Sigmoid colon (tissue), 7 donors: ENCODE measurements at regions of chr19 and their contacts with region 1.

Region 1: DNA sequence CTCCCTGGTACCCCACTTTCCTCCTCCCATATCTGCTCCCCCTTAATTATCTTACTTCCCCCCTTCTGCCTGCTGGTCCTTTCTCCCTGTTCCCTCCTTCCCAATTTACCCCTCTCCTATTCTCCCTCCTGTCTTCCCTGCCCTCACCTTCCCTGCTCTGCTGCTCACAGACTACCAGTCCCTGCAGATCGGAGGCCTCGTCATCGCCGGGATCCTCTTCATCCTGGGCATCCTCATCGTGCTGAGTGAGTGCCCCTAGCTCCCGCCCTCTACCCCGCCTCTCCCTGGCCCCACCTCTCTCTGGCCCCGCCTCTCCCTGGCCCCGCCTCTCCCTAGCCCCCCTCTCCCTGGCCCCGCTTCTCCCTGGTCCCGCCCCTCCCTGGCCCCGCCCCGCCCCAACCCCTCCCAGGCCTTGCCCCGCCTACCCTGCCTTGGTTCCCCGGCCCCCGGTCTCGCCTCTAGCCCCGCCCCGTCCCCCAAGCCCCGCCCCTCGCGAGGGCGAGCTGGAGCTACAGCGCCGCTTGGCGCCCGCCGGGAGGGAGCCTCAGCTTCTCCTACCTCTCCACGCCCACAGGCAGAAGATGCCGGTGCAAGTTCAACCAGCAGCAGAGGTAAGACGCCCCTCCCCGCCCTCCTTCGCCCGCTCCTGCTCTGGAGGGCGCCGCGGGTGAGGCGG is 2.0 kb upstream of the FXYD7 start:
- DNase-seq: peak; percentile 96
- H3K4me3 ChIP-seq: peak overlapping the region; percentile 34 to 53 (median 47)
- H3K27ac ChIP-seq: peak overlapping the region; percentile 82 to 84 (median 84)
- H3K4me1 ChIP-seq: peaks cover 0 to 48% (median 38%) of the 10 kb centered on the region in 4 donors
- H3K27me3 ChIP-seq: peaks cover 30 to 83% (median 38%) of the 10 kb centered on the region in 3 donors
- CTCF ChIP-seq: peak in 2 of 4 experiments; percentile 12 to 31
- EP300 ChIP-seq: no peak
- POLR2A ChIP-seq: peak; percentile 71 to 80

Region 2: GRCh38 chr19:35066691-35067563 is 74.2 kb before region 1 on chr19:
- intact Hi-C with region 1: loop called (anchors 5 kb)
- DNase-seq: peak; percentile 89
- H3K4me3 ChIP-seq: no peak overlapping the region
- H3K27ac ChIP-seq: no peak overlapping the region
- H3K4me1 ChIP-seq: no peaks in the 10 kb centered on the region
- H3K27me3 ChIP-seq: no peaks in the 10 kb centered on the region
- CTCF ChIP-seq: peak; percentile 51 to 71 (median 66)
- EP300 ChIP-seq: no peak
- POLR2A ChIP-seq: no peak

Region 3: DNA sequence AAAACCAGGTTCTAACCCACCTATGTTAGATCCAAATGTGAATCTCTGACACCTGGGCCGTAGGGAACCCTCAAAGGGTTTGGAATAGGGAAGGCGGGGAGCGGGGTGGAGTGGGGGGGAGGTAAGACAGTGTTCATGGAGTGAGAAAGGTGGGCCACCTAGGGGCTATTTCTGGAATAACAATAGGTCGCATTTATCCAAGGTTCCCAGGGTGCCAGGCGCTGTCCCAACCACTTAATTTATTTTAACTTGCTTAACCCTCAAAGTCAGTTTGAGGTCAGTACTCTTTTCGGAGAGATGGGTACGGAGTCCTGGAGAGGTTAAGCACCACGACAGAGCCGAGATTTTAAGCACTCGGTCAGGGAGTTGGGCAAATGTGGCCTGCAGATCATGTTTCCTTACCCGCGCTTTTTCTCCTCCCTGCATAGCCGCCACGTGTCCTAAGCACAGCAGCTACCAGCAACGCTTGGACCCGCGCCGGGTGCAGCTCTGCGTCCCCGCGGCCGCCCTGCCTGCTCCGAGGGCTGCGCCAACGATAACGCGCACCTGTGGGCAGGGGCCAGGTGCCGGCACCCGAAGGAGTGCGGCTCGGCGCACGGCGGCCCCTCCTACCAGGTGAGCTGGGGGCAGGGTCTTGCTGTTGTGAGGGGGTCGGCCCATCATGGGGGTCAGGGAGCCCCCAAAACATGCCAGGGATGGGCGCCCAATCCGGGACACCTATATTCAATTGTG is 50.4 kb before region 1 on chr19:
- intact Hi-C with region 1: no loop called
- DNase-seq: no peak
- H3K4me3 ChIP-seq: no peak overlapping the region
- H3K27ac ChIP-seq: no peak overlapping the region
- H3K4me1 ChIP-seq: peaks cover 0 to 11% (median 7%) of the 10 kb centered on the region in 4 donors
- H3K27me3 ChIP-seq: peaks cover 0 to 27% (median 23%) of the 10 kb centered on the region in 3 donors
- CTCF ChIP-seq: peak in 2 of 4 experiments; percentile 41 to 61
- EP300 ChIP-seq: no peak
- POLR2A ChIP-seq: no peak

Region 4: DNA sequence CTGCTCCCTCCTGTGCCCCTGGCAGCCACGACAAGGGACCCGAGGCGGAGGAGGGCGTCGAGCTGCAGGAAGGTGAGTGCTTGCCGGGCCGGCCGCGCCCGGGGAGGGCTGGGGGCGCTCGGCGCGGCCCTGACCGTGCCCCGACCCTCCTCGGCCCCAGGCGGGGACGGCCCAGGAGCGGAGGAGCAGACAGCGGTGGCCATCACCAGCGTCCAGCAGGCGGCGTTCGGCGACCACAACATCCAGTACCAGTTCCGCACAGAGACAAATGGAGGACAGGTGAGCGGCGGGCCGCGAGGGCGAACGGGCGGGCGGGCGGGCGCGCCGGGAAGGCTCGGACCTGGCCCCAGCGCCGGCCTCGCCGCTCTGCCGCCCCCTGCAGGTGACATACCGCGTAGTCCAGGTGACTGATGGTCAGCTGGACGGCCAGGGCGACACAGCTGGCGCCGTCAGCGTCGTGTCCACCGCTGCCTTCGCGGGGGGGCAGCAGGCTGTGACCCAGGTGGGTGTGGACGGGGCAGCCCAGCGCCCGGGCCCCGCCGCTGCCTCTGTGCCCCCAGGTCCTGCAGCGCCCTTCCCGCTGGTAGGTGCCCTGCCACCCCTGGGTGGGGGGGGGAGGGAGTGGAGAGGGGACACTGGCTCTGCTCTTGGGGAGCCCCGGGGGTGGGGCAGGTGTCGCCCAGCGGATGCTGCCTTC is 128.5 kb after region 1 on chr19:
- intact Hi-C with region 1: loop called (anchors 10 kb)
- DNase-seq: peak; percentile 92
- H3K4me3 ChIP-seq: peak overlapping the region; percentile 51 to 75 (median 70)
- H3K27ac ChIP-seq: peak overlapping the region; percentile 91 to 95 (median 92)
- H3K4me1 ChIP-seq: peaks cover 0 to 40% (median 28%) of the 10 kb centered on the region in 4 donors
- H3K27me3 ChIP-seq: no peaks in the 10 kb centered on the region
- CTCF ChIP-seq: peak in 2 of 4 experiments; percentile 23 to 78
- EP300 ChIP-seq: no peak
- POLR2A ChIP-seq: no peak